ENCODE measurements at regions of chr15 and their contacts with region 1.

Region 1: DNA sequence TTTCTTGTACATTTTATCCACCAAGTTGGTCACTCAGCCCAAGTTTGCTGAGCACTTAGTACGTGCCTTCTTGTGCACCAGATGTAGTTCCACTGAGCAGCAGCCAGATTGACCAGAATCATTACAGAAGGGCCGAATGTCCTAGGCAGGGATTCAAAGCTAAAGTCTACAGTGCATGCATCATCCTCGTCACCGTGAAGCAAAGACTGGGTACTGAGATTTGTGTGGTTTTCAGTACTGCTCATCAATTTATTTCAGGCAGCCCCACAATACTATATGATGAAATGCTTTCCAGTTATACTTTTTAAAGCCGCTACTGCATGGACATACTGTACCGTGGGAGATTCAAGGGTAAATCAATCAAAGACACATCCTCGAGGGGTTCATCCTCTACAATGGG is 227.0 kb downstream of the ARRDC4 start:
- DNase-seq: no peak
- ATAC-seq: no peak
- H3K4me3 ChIP-seq: no peak overlapping the region
- H3K27ac ChIP-seq: no peak overlapping the region
- H3K4me1 ChIP-seq: no peaks in the 10 kb centered on the region
- H3K27me3 ChIP-seq: peaks cover 0 to 1% (median 0%) of the 10 kb centered on the region in 3 donors
- CTCF ChIP-seq: no peak
- POLR2A ChIP-seq: no peak

Region 2: GRCh38 chr15:98123834-98124474 is 63.6 kb before region 1 on chr15:
- in situ Hi-C with region 1: no loop called
- intact Hi-C with region 1: loop called (anchors 10 kb)
- DNase-seq: no peak
- ATAC-seq: no peak
- H3K4me3 ChIP-seq: no peak overlapping the region
- H3K27ac ChIP-seq: no peak overlapping the region
- H3K4me1 ChIP-seq: no peaks in the 10 kb centered on the region
- H3K27me3 ChIP-seq: no peaks in the 10 kb centered on the region
- CTCF ChIP-seq: no peak
- POLR2A ChIP-seq: no peak

Region 3: GRCh38 chr15:98375513-98376340 is 188.2 kb after region 1 on chr15:
- in situ Hi-C with region 1: no loop called
- intact Hi-C with region 1: no loop called
- DNase-seq: no peak
- ATAC-seq: no peak
- H3K4me3 ChIP-seq: no peak overlapping the region
- H3K27ac ChIP-seq: no peak overlapping the region
- H3K4me1 ChIP-seq: no peaks in the 10 kb centered on the region
- H3K27me3 ChIP-seq: no peaks in the 10 kb centered on the region
- CTCF ChIP-seq: no peak
- POLR2A ChIP-seq: no peak